Sigmoid colon (tissue), 7 donors: ENCODE measurements at regions of chr7 and their contacts with region 1.

Region 1: DNA sequence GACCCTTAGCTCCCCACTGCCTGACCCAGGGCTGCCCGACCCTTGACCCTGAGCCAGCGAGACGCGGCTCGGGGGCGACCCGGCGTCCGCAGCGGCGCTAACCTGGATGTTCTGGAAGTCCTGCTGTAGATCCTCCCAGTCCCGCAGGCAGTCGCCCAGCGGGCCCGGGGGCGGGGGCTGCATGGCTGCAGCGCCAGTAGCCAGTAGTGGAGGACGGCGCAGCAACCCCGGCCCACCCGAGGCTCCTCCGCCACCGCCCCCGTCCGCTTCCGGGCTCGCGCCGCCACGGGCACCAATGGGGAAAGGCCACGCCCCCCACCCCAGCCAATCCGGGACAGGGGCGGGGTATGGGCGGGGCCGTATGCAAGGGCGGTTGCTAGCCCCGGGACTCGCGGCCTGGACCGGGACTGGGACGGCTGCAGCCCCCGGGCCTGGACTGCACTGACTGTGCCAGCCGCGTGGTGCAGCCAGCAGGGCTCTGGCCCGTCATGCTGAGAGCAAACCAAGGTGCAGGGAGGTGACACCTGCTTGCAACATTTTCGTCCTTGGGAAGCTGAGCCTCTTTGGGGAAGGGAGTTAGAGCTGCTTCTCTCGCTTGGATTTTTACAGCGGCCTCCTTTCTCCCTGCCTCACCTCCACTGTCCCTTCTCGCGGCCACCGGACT is at the start of gene TMEM120A:
- DNase-seq: peak; percentile 99
- H3K4me3 ChIP-seq: peak within 1 kb of the TSS; percentile 73 to 97 (median 86)
- H3K27ac ChIP-seq: peak within 1 kb of the TSS; percentile 95 to 99 (median 98)
- H3K4me1 ChIP-seq: peaks cover 0 to 30% (median 24%) of the 10 kb centered on the region in 4 donors
- H3K27me3 ChIP-seq: no peaks in the 10 kb centered on the region
- CTCF ChIP-seq: peak in 1 of 4 experiments; percentile 26
- EP300 ChIP-seq: peak in 1 of 4 donors; percentile 6
- POLR2A ChIP-seq: peak; percentile 88 to 90
- total RNA-seq, gene TMEM120A: 18.3 to 49.0 (median 35.9) TPM

Region 2: GRCh38 chr7:75534727-75535307 is 459.7 kb before region 1 on chr7:
- intact Hi-C with region 1: no loop called
- DNase-seq: no peak
- H3K4me3 ChIP-seq: no peak overlapping the region
- H3K27ac ChIP-seq: no peak overlapping the region
- H3K4me1 ChIP-seq: no peaks in the 10 kb centered on the region
- H3K27me3 ChIP-seq: no peaks in the 10 kb centered on the region
- CTCF ChIP-seq: no peak
- EP300 ChIP-seq: no peak
- POLR2A ChIP-seq: no peak

Region 3: GRCh38 chr7:75878769-75879611 is 115.5 kb before region 1 on chr7 and contains the start of gene RHBDD2:
- intact Hi-C with region 1: loop called (anchors 1 kb)
- DNase-seq: peak; percentile 98
- H3K4me3 ChIP-seq: peak within 1 kb of the TSS; percentile 66 to 85 (median 76)
- H3K27ac ChIP-seq: peak within 1 kb of the TSS; percentile 70 to 85 (median 83)
- H3K4me1 ChIP-seq: peaks cover 0 to 23% (median 16%) of the 10 kb centered on the region in 4 donors
- H3K27me3 ChIP-seq: no peaks in the 10 kb centered on the region
- CTCF ChIP-seq: peak in 1 of 4 experiments; percentile 25
- EP300 ChIP-seq: no peak
- POLR2A ChIP-seq: peak; percentile 92 to 94
- total RNA-seq, gene RHBDD2: 14.3 to 31.9 (median 27.0) TPM

Region 4: GRCh38 chr7:75914730-75915585 is 79.6 kb before region 1 on chr7 and contains the start of gene POR:
- intact Hi-C with region 1: loop called (anchors 1 kb)
- DNase-seq: peak; percentile 97
- H3K4me3 ChIP-seq: peak within 1 kb of the TSS; percentile 86 to 100 (median 88)
- H3K27ac ChIP-seq: peak within 1 kb of the TSS; percentile 89 to 95 (median 92)
- H3K4me1 ChIP-seq: peaks cover 0 to 35% (median 22%) of the 10 kb centered on the region in 4 donors
- H3K27me3 ChIP-seq: no peaks in the 10 kb centered on the region
- CTCF ChIP-seq: no peak
- EP300 ChIP-seq: no peak
- POLR2A ChIP-seq: peak; percentile 88 to 97
- total RNA-seq, gene POR: 33.2 to 47.4 (median 39.2) TPM

Region 5: GRCh38 chr7:76340617-76341131 is 346.2 kb after region 1 on chr7:
- intact Hi-C with region 1: no loop called
- DNase-seq: peak; percentile 46
- H3K4me3 ChIP-seq: no peak overlapping the region
- H3K27ac ChIP-seq: peak overlapping the region in 3 of 4 donors; percentile 13 to 62 (median 58)
- H3K4me1 ChIP-seq: peaks cover 0 to 58% (median 47%) of the 10 kb centered on the region in 4 donors
- H3K27me3 ChIP-seq: no peaks in the 10 kb centered on the region
- CTCF ChIP-seq: no peak
- EP300 ChIP-seq: no peak
- POLR2A ChIP-seq: no peak